Activated naive CD8-positive, alpha-beta T cell treated with anti-CD3 and anti-CD28 coated beads, Interleukin-2, amount 10 ng/mL, durations not matched to agents 7 days and 5 days (primary cell): ENCODE measurements at regions of chr10 and their contacts with region 1.

Region 1: GRCh38 chr10:100496567-100496966 is 23.1 kb downstream of the SEC31B start:
- DNase-seq: no peak
- ATAC-seq: no peak
- H3K4me3 Mint-ChIP-seq: peak overlapping the region; percentile 3
- H3K27ac Mint-ChIP-seq: peak overlapping the region; percentile 68
- H3K4me1 Mint-ChIP-seq: peaks cover 57% of the 10 kb centered on the region
- H3K27me3 Mint-ChIP-seq: no peaks in the 10 kb centered on the region

Region 2: DNA sequence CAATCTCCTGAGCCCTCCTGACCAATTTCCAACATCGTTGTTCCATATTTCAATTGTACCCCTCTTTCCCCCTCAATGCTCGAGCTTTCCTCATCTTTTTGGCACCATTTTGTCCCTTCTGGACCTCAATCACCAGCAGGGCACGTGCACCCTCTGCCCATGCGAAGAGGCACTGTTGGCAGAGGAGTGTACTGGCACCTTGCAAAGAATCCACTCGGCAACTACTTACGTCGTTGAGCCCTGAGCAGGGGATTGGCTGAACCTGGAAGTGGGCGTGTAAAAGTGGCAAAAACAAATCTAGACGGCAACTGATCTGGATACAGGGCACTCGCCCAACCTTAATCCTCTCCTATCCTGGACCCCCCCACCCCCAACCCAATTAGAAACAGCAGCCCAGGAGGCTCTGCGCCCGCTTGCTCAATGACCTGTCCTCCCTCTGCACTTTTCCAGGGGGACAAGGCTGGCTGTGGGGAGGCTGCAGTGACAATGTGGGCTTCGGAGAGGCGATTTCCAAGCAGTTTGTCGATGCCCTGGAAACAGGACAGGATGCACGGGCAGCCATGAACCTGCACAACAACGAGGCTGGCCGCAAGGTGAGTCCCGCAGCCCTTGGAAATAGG is 15.0 kb before region 1 on chr10:
- POLR2A ChIA-PET with region 1: interaction called, 28 read pairs
- DNase-seq: peak; percentile 91
- ATAC-seq: peak; percentile 84
- H3K4me3 Mint-ChIP-seq: peak overlapping the region; percentile 80
- H3K27ac Mint-ChIP-seq: peak overlapping the region; percentile 69
- H3K4me1 Mint-ChIP-seq: peaks cover 29% of the 10 kb centered on the region
- H3K27me3 Mint-ChIP-seq: peaks cover 12% of the 10 kb centered on the region

Region 3: DNA sequence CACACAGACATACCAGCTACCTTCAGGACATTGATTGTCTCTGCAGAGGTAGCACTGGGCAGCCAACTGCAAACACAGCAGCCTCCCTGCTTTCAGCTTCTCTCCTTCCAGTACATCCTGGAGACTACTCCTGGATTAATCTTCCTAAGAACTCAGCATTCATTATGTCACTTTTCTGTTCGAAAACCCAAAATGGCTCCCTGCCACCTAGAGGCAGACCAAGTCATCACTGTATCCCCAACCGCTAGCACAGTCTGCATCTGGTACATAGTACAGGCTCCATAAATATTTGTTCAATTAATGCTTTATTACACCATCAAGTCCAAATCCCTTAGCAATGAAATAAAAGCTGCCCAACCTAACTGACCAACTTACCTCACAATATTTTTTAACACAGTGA is 28.1 kb after region 1 on chr10:
- POLR2A ChIA-PET with region 1: no interaction called
- DNase-seq: no peak
- ATAC-seq: no peak
- H3K4me3 Mint-ChIP-seq: no peak overlapping the region
- H3K27ac Mint-ChIP-seq: peak overlapping the region; percentile 35
- H3K4me1 Mint-ChIP-seq: peaks cover 21% of the 10 kb centered on the region
- H3K27me3 Mint-ChIP-seq: no peaks in the 10 kb centered on the region